Mammary epithelial cell (primary cell): ENCODE measurements at regions of chr17 and their contacts with region 1.

Region 1: DNA sequence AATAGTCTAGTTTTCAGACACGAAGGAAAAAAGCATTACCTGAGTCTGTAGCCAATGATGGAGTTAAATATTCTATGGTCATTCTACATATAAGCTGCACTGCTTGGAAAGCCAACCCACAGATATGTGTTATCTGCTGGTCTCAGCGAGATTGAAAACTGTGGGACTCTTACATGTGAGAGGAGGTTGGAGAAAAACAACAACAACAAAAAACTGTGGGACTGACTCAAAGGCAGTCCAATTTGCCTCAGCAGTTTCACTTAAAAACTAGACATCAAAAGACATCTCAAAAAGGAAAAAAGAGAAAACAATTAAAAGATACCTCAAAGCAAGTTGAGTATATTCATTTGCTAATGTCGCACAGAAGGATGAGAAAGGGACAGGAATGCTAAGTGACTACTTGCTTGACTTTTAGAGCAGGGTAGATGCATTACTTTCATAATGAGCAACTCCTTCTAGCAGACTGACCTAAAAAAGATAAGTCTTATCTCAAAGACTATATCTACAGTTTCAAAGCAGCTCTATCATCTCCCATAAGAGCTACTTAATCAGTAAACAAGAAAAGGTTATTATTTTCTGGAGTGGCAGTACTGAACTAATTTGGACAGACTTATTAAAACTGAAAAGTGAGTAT is 35.5 kb upstream of the ITGA2B start:
- DNase-seq: no peak
- H3K4me3 ChIP-seq: no peak overlapping the region
- H3K27ac ChIP-seq: no peak overlapping the region
- H3K4me1 ChIP-seq: no peaks in the 10 kb centered on the region
- H3K27me3 ChIP-seq: no peaks in the 10 kb centered on the region
- CTCF ChIP-seq: no peak

Region 2: DNA sequence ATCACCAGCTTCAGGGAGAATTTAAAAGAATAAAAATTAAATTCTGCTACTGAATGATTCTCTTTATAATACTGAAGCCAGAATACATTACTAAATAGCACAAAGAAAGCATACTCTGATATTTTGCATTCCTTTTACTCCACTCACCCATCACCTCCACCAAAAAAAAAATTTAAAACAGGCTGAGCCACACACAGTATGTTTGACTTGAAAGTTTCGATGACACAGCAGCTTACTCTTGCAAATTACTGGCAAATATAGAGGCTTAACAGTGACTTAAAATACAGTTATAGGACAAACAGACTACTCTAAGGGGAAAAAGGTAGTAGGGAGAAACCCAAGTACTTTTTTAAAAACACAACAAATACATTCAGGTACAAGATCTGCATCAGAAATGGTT is 39.1 kb after region 1 on chr17:
- CTCF ChIA-PET with region 1: no interaction called
- dilution Hi-C with region 1: no loop called
- in situ Hi-C with region 1: no loop called
- intact Hi-C with region 1: loop called (anchors 1 kb)
- DNase-seq: peak; percentile 24
- H3K4me3 ChIP-seq: no peak overlapping the region
- H3K27ac ChIP-seq: no peak overlapping the region
- H3K4me1 ChIP-seq: no peaks in the 10 kb centered on the region
- H3K27me3 ChIP-seq: no peaks in the 10 kb centered on the region
- CTCF ChIP-seq: no peak